Transverse colon (tissue), 4 donors: ENCODE measurements at regions of chr2 and their contacts with region 1.

Region 1: DNA sequence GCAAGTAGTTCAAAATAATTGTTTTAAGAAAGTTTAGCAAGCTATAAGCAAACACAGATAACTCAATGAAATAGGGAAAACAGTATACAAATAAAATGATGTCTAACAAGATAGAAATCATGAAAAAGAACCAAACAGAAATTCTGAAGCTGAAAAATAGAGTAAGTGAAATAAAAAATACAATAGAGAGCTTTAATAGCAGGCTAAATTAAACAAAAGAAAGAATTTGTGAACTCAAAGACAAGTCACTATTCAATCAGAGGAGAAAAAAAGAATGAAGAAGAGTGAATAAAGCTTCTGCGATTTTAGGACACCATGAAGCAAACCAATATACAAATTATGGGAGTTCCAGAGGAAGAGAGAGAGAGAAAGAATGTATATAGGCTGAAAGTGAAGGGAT is 576.8 kb downstream of the STK39 start:
- DNase-seq: no peak
- H3K4me3 ChIP-seq: no peak overlapping the region
- H3K27ac ChIP-seq: no peak overlapping the region
- H3K4me1 ChIP-seq: no peaks in the 10 kb centered on the region
- H3K27me3 ChIP-seq: no peaks in the 10 kb centered on the region
- CTCF ChIP-seq: no peak
- EP300 ChIP-seq: no peak
- POLR2A ChIP-seq: no peak

Region 2: GRCh38 chr2:167651406-167652151 is 19.0 kb before region 1 on chr2:
- in situ Hi-C with region 1: no loop called
- intact Hi-C with region 1: loop called (anchors 1 kb)
- DNase-seq: no peak
- H3K4me3 ChIP-seq: no peak overlapping the region
- H3K27ac ChIP-seq: no peak overlapping the region
- H3K4me1 ChIP-seq: no peaks in the 10 kb centered on the region
- H3K27me3 ChIP-seq: no peaks in the 10 kb centered on the region
- CTCF ChIP-seq: no peak
- EP300 ChIP-seq: no peak
- POLR2A ChIP-seq: no peak